Activated CD4-positive, alpha-beta memory T cell treated with anti-CD3 and anti-CD28 coated beads, Interleukin-2, amount 10 ng/mL, durations not matched to agents 7 days and 5 days (primary cell): ENCODE measurements at regions of chr17 and their contacts with region 1.

Region 1: DNA sequence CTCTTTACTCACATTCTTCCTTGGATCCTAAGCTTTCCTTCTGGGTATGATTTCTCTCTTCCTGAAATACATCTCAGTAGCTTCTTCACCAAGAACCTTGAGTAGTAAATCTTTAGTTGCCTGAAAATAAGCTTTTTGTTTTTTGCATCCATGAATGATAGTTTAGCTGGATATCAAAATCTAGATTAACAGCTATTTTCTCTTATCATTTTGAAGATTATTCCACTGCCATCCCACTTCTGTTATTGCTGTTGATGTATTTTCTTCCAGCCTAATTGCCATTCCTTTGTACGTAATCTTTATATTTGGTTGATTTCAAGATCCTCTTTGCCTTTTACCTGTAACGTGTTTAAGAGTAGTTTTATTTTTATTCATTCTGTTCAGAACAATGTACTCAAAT is 7.6 kb upstream of the FBXO39 start:
- DNase-seq: no peak
- H3K4me3 Mint-ChIP-seq: no peak overlapping the region
- H3K27ac Mint-ChIP-seq: no peak overlapping the region
- H3K4me1 Mint-ChIP-seq: peaks cover 39% of the 10 kb centered on the region
- H3K27me3 Mint-ChIP-seq: no peaks in the 10 kb centered on the region

Region 2: DNA sequence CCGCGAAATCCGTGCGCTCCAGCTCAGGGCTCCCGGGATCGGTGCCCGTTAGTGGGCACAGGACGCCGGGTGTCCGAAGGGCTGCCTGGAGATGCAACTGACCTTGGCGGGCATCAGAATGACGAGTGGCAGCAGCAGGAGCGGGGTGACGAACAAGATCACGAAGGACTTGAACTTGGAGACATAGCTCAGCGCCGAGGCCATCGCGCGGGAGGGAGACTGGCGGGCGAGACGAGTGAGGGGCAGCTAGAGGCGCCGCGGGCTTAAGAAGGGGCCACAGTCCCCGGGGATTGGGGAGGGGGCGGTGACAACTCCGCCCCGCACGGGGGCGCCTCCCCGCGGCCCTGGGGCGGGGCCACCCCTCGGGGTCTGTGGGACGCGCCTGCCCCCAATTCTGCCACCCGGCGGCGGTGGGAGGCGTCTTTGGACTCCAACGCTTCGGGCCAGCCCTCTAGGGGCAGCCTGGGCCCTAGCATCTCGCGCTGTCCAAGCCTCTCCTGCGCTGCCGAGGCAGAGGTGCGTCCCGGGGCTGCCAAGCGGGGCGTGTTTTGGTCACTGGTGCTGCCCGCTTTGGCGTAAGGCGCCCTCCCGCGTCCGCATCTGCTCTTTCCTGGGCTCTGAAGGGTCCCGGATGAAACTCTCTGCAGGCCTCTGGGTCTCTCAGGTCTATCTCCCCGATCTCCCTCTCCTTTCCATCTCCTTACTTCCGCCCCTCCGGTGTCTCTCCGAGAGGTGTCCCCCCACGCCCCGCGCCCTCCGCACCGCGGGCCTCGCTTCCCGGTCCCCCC is 55.1 kb before region 1 on chr17 and contains the start of gene SLC13A5:
- CTCF ChIA-PET with region 1: no interaction called
- POLR2A ChIA-PET with region 1: no interaction called
- DNase-seq: no peak
- H3K4me3 Mint-ChIP-seq: no peak within 1 kb of the TSS
- H3K27ac Mint-ChIP-seq: no peak within 1 kb of the TSS
- H3K4me1 Mint-ChIP-seq: peaks cover 16% of the 10 kb centered on the region
- H3K27me3 Mint-ChIP-seq: peaks cover 67% of the 10 kb centered on the region
- total RNA-seq, gene SLC13A5: not detected

Region 3: DNA sequence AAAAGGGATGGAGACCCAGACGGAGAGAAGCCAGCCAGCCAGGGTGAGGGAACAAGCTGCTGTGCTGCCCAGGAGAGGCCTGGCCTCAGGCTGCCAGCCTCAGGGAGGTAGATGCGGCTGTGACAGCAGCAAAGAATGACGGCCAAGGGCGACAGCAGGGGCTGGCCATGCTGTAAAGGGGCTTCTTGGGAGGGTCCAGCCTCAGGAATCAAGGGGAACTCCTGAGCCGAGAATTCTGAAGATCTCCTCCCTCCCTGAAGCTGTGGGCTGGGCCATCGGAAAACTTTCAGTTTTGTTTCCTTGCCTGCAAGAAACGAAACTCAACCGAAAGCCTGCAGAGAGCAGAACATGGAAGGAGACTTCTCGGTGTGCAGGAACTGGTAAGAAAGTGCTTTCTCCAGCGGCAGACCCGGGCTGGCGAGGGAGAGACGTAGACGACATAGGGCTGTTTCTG is 12.7 kb before region 1 on chr17 and contains the start of gene XAF1:
- CTCF ChIA-PET with region 1: no interaction called
- POLR2A ChIA-PET with region 1: interaction called, 22 read pairs
- DNase-seq: peak; percentile 81
- H3K4me3 Mint-ChIP-seq: peak within 1 kb of the TSS; percentile 95
- H3K27ac Mint-ChIP-seq: peak within 1 kb of the TSS; percentile 96
- H3K4me1 Mint-ChIP-seq: peaks cover 66% of the 10 kb centered on the region
- H3K27me3 Mint-ChIP-seq: peaks cover 2% of the 10 kb centered on the region
- total RNA-seq, gene XAF1: 408 TPM